Activated T-helper 2 cell treated with anti-CD3 and anti-CD28 coated beads, Interferon-gamma antibody, Interleukin-2, Interleukin-4, amounts not matched to agents 10 μg/mL and 5 μg/mL and 100 μg/mL, durations not matched to agents 14 hours and 24 hours and 36 hours (primary cell): ENCODE measurements at regions of chr2 and their contacts with region 1.

Region 1: GRCh38 chr2:143128681-143129580 is at the start of gene ARHGAP15:
- DNase-seq: peak; percentile 66
- H3K4me3 Mint-ChIP-seq: peak within 1 kb of the TSS; percentile 75
- H3K27ac Mint-ChIP-seq: peak within 1 kb of the TSS; percentile 99
- H3K4me1 Mint-ChIP-seq: peaks cover 34% of the 10 kb centered on the region
- H3K27me3 Mint-ChIP-seq: no peaks in the 10 kb centered on the region
- total RNA-seq, gene ARHGAP15: 54.1 and 58.3 TPM in 2 replicates

Region 2: GRCh38 chr2:143110758-143111428 is 18.0 kb before region 1 on chr2:
- intact Hi-C with region 1: loop called (anchors 1 kb)
- DNase-seq: peak; percentile 46
- H3K4me3 Mint-ChIP-seq: no peak overlapping the region
- H3K27ac Mint-ChIP-seq: peak overlapping the region; percentile 64
- H3K4me1 Mint-ChIP-seq: peaks cover 39% of the 10 kb centered on the region
- H3K27me3 Mint-ChIP-seq: peaks cover 8% of the 10 kb centered on the region

Region 3: GRCh38 chr2:143148757-143149156 is 19.8 kb after region 1 on chr2:
- intact Hi-C with region 1: loop called (anchors 2 kb)
- DNase-seq: no peak
- H3K4me3 Mint-ChIP-seq: no peak overlapping the region
- H3K27ac Mint-ChIP-seq: peak overlapping the region; percentile 56
- H3K4me1 Mint-ChIP-seq: peaks cover 72% of the 10 kb centered on the region
- H3K27me3 Mint-ChIP-seq: no peaks in the 10 kb centered on the region

Region 4: GRCh38 chr2:143259368-143259958 is 130.5 kb after region 1 on chr2:
- intact Hi-C with region 1: loop called (anchors 1 kb)
- DNase-seq: peak; percentile 54
- H3K4me3 Mint-ChIP-seq: peak overlapping the region; percentile 63
- H3K27ac Mint-ChIP-seq: peak overlapping the region; percentile 92
- H3K4me1 Mint-ChIP-seq: peaks cover 73% of the 10 kb centered on the region
- H3K27me3 Mint-ChIP-seq: no peaks in the 10 kb centered on the region

Region 5: GRCh38 chr2:143334719-143335236 is 205.8 kb after region 1 on chr2:
- intact Hi-C with region 1: no loop called
- DNase-seq: no peak
- H3K4me3 Mint-ChIP-seq: no peak overlapping the region
- H3K27ac Mint-ChIP-seq: no peak overlapping the region
- H3K4me1 Mint-ChIP-seq: peaks cover 9% of the 10 kb centered on the region
- H3K27me3 Mint-ChIP-seq: no peaks in the 10 kb centered on the region